ENCODE measurements at regions of chr11 and their contacts with region 1.

Region 1: DNA sequence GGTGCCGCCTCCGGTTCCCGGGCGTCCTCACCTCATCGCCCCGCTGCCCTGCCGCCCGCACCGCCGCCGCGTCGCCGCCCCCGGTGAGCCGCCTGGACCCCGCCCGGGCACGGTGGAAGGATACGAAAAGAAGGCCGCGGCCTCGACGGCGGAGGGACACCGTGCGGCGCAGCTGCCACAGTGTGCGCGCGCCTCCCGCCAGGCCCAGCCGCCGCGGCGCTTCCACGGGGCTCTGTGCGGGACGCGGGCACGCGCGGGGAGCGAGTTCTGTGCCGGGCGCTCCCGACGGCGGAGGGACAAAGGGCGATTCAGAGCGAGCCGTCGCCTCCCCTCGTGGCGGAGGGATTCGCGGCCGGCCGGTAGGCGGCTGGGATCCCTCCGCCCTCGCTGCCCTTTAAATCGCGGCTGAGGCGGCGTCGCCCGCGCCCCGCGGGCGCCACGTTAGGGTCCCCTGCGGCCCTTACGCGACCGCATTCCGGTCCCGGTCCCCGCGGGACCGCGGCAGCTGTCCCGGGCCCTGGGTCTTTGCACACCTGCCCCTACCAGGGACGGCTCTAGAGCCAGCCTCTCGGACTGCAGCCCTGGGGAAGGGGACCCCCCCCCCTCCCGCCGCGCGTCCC is 569 bp upstream of the KMT5B start:
- DNase-seq: peak; percentile 86 to 96 (median 90)
- H3K4me3 ChIP-seq: peak overlapping the region; percentile 35 to 91 (median 84)
- H3K4me3 Mint-ChIP-seq: peak overlapping the region; percentile 81 to 87
- H3K27ac ChIP-seq: peak overlapping the region; percentile 49 to 97
- H3K27ac Mint-ChIP-seq: peak overlapping the region in 6 of 7 donors; percentile 75 to 91 (median 83)
- H3K4me1 ChIP-seq: peaks cover 39 to 47% of the 10 kb centered on the region in 2 donors
- H3K4me1 Mint-ChIP-seq: peaks cover 47% of the 10 kb centered on the region
- H3K27me3 ChIP-seq: peaks cover 0 to 18% of the 10 kb centered on the region in 2 donors
- H3K27me3 Mint-ChIP-seq: peaks cover 20 to 29% (median 21%) of the 10 kb centered on the region in 3 donors
- CTCF ChIP-seq: no peak

Region 2: GRCh38 chr11:68003846-68004550 is 209.7 kb before region 1 on chr11 and contains the start of gene UNC93B1:
- intact Hi-C with region 1: loop called in 1 of 2 experiments (anchors 10 kb)
- DNase-seq: peak; percentile 81 to 88 (median 86)
- H3K4me3 ChIP-seq: peak within 1 kb of the TSS; percentile 80 to 97 (median 90)
- H3K4me3 Mint-ChIP-seq: peak within 1 kb of the TSS; percentile 95 to 97
- H3K27ac ChIP-seq: peak within 1 kb of the TSS; percentile 61 to 71
- H3K27ac Mint-ChIP-seq: peak within 1 kb of the TSS; percentile 73 to 93 (median 88)
- H3K4me1 ChIP-seq: peaks cover 51 to 74% of the 10 kb centered on the region in 2 donors
- H3K4me1 Mint-ChIP-seq: peaks cover 55% of the 10 kb centered on the region
- H3K27me3 ChIP-seq: no peaks in the 10 kb centered on the region
- H3K27me3 Mint-ChIP-seq: peaks cover 0 to 1% (median 0%) of the 10 kb centered on the region in 3 donors
- CTCF ChIP-seq: no peak
- polyA plus RNA-seq, gene UNC93B1: 185 to 301 (median 220) TPM

Region 3: GRCh38 chr11:68271781-68272608 is 58.3 kb after region 1 on chr11 and contains the start of gene C11orf24:
- intact Hi-C with region 1: loop called in 1 of 2 experiments (anchors 5 kb)
- DNase-seq: peak; percentile 94 to 96 (median 95)
- H3K4me3 ChIP-seq: peak within 1 kb of the TSS; percentile 71 to 90 (median 77)
- H3K4me3 Mint-ChIP-seq: peak within 1 kb of the TSS; percentile 89 to 95
- H3K27ac ChIP-seq: peak within 1 kb of the TSS; percentile 95 to 96
- H3K27ac Mint-ChIP-seq: peak within 1 kb of the TSS; percentile 95 to 99 (median 98)
- H3K4me1 ChIP-seq: peaks cover 50 to 62% of the 10 kb centered on the region in 2 donors
- H3K4me1 Mint-ChIP-seq: peaks cover 51% of the 10 kb centered on the region
- H3K27me3 ChIP-seq: no peaks in the 10 kb centered on the region
- H3K27me3 Mint-ChIP-seq: peaks cover 0 to 7% (median 0%) of the 10 kb centered on the region in 3 donors
- CTCF ChIP-seq: no peak
- polyA plus RNA-seq, gene C11orf24: 9.5 to 21.8 (median 12.6) TPM

Region 4: DNA sequence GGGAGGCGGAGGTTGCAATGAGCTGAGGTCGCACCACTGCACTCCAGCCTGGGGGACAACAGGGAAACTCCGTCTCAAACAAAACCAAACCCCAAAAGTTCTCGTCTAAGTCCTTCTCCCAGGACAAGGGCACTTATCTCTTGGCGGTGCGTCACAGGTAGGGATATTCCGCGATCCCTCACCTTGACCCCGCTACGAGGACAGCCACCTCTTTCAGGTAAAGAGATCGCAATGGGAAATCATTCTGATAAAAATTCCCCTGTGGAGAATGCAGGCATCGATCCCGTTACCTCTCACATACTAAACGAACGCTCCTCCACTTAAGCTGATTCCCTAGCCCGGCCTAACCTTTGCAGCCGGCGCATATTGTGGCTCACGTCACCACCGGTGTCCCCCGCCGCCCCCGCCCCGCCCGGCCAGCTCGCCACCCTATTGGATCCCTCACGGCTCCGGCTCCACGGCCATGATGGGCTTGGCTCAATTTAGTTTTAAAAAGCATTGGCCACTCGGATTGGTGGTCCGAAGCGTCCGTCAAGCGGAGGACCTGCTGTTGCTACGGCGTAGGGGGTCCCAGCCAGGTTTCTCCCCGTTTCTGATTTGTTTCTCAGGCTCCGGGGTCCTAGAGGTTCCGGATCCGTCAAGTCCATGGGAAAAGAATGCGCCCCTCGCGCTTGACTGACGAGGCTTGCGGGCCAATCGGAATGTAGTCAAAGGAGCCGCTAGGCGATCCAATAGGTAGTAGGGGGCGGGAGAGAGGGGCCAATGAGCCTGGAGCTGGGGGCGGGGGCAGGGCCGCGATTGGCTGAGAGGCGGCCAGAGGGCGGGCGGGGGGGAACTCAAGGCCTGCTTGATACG is 246.4 kb after region 1 on chr11:
- intact Hi-C with region 1: loop called in 1 of 2 experiments (anchors 5 kb)
- DNase-seq: peak; percentile 94 to 97 (median 95)
- H3K4me3 ChIP-seq: peak overlapping the region; percentile 61 to 85 (median 77)
- H3K4me3 Mint-ChIP-seq: peak overlapping the region; percentile 87 to 92
- H3K27ac ChIP-seq: peak overlapping the region; percentile 72 to 94
- H3K27ac Mint-ChIP-seq: peak overlapping the region; percentile 95 to 99 (median 97)
- H3K4me1 ChIP-seq: peaks cover 23 to 33% of the 10 kb centered on the region in 2 donors
- H3K4me1 Mint-ChIP-seq: peaks cover 42% of the 10 kb centered on the region
- H3K27me3 ChIP-seq: no peaks in the 10 kb centered on the region
- H3K27me3 Mint-ChIP-seq: peaks cover 0 to 11% (median 2%) of the 10 kb centered on the region in 3 donors
- CTCF ChIP-seq: no peak